ENCODE measurements at regions of chr2 and their contacts with region 1.

Region 1: GRCh38 chr2:207473049-207473930 is 56.5 kb upstream of the CREB1 start:
- DNase-seq: no peak
- H3K4me3 ChIP-seq: no peak overlapping the region
- H3K4me3 Mint-ChIP-seq: no peak overlapping the region
- H3K27ac Mint-ChIP-seq: no peak overlapping the region
- H3K4me1 ChIP-seq: peaks cover 25% of the 10 kb centered on the region
- H3K4me1 Mint-ChIP-seq: peaks cover 17% of the 10 kb centered on the region
- H3K27me3 ChIP-seq: no peaks in the 10 kb centered on the region
- H3K27me3 Mint-ChIP-seq: no peaks in the 10 kb centered on the region
- CTCF ChIP-seq: peak; percentile 9 to 30

Region 2: DNA sequence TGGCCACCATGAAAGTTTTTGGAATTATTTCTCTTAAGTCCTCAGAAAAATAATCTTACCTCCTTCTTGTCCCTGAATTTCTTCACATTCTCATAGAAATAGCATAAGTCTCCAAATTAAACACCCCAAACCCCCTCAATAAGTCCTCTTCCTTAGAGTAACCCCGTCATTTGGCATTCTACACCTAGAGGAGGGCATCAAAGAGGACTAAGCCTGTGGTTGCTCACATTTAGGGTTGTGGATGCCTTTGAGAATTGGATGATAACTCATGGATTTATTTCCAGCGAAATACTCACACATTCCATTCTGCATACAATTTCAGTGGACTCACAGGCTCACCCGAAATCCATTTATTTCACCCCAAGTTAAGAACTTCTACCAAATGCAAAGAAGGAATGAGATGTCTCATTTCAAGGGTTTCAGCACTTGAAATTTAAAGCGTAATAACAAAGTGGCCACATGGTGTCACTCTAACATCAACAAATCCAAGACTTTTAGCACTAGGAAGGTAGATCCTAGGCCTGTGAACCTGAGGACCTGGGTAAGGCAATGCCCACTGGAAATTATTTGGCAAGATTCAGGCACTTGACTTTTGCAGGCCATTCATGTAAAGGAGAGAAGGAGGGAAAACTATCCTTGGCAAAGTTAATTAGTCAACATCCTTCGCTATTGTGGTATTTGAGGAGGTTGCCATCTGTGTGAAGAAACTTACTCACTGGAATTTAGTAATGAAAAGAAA is 779.7 kb before region 1 on chr2:
- CTCF ChIA-PET with region 1: no interaction called
- POLR2A ChIA-PET with region 1: no interaction called
- intact Hi-C with region 1: loop called (anchors 1 kb)
- DNase-seq: peak in 1 of 2 experiments; percentile 62
- H3K4me3 ChIP-seq: no peak overlapping the region
- H3K4me3 Mint-ChIP-seq: no peak overlapping the region
- H3K27ac Mint-ChIP-seq: no peak overlapping the region
- H3K4me1 ChIP-seq: no peaks in the 10 kb centered on the region
- H3K4me1 Mint-ChIP-seq: no peaks in the 10 kb centered on the region
- H3K27me3 ChIP-seq: peaks cover 1% of the 10 kb centered on the region; the same call in 1 of the 2 replicates
- H3K27me3 Mint-ChIP-seq: peaks cover 27% of the 10 kb centered on the region
- CTCF ChIP-seq: peak; percentile 52 to 66

Region 3: DNA sequence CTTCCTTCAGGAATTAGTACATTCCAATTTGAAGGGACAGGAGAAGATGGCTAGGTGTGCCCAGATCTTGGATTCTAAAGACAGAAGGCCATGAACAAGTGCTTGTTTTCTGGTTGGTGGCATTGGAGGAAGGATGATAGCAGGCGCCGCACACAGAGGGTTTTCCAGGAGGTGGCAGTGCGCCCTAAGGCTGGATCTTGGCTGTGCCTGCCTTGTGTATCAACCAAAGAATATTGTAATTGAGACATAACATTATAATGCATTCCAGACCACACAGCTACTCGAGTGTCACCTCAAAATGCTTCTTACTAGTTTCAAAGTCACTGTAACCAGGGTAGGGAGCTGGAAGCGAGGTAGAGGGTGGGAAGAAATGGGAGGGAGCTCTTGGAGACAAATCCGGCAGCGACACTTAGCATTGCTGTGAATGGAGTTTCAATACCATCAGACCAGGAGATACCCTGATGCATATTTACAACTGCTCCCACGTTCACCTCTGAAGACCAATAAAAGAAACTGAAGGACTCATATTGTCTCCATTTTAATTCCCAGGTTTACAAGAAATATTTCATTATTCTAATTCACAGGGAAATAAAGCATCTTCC is 491.4 kb before region 1 on chr2:
- CTCF ChIA-PET with region 1: no interaction called
- POLR2A ChIA-PET with region 1: no interaction called
- intact Hi-C with region 1: loop called (anchors 1 kb)
- DNase-seq: peak in 1 of 2 experiments; percentile 37
- H3K4me3 ChIP-seq: no peak overlapping the region
- H3K4me3 Mint-ChIP-seq: no peak overlapping the region
- H3K27ac Mint-ChIP-seq: no peak overlapping the region
- H3K4me1 ChIP-seq: no peaks in the 10 kb centered on the region
- H3K4me1 Mint-ChIP-seq: no peaks in the 10 kb centered on the region
- H3K27me3 ChIP-seq: no peaks in the 10 kb centered on the region
- H3K27me3 Mint-ChIP-seq: peaks cover 10% of the 10 kb centered on the region
- CTCF ChIP-seq: peak; percentile 23 to 59

Region 4: DNA sequence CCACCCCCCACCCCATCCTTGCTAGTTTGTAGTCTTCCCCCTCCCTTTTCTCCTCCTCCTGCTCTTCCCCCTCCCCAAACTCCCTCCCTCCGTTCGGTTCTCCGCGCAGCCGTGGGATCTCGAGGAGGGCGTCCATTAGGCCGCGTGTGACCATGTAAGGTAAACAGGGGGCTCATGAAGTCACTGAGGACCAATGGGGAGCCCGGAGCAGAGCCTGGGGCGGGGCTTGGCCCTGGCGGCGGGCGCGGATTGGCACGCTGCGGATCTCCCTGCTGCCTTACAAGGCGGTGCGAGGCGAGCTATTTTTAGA is 307.3 kb before region 1 on chr2:
- CTCF ChIA-PET with region 1: interaction called, 3 read pairs
- POLR2A ChIA-PET with region 1: no interaction called
- intact Hi-C with region 1: loop called (anchors 5 kb)
- DNase-seq: peak; percentile 94 to 96
- H3K4me3 ChIP-seq: peak overlapping the region; percentile 39
- H3K4me3 Mint-ChIP-seq: peak overlapping the region; percentile 90
- H3K27ac Mint-ChIP-seq: peak overlapping the region; percentile 88
- H3K4me1 ChIP-seq: peaks cover 10% of the 10 kb centered on the region; the same call in 1 of the 2 replicates
- H3K4me1 Mint-ChIP-seq: peaks cover 9% of the 10 kb centered on the region
- H3K27me3 ChIP-seq: peaks cover 10% of the 10 kb centered on the region
- H3K27me3 Mint-ChIP-seq: peaks cover 23% of the 10 kb centered on the region
- CTCF ChIP-seq: no peak

Region 5: GRCh38 chr2:207341804-207342203 is 131.5 kb before region 1 on chr2:
- CTCF ChIA-PET with region 1: interaction called, 4 read pairs
- POLR2A ChIA-PET with region 1: no interaction called
- intact Hi-C with region 1: loop called (anchors 1 kb)
- DNase-seq: peak in 1 of 2 experiments; percentile 26
- H3K4me3 ChIP-seq: no peak overlapping the region
- H3K4me3 Mint-ChIP-seq: no peak overlapping the region
- H3K27ac Mint-ChIP-seq: no peak overlapping the region
- H3K4me1 ChIP-seq: no peaks in the 10 kb centered on the region
- H3K4me1 Mint-ChIP-seq: no peaks in the 10 kb centered on the region
- H3K27me3 ChIP-seq: no peaks in the 10 kb centered on the region; the same call in 1 of the 2 replicates
- H3K27me3 Mint-ChIP-seq: no peaks in the 10 kb centered on the region
- CTCF ChIP-seq: no peak

Region 6: GRCh38 chr2:208545403-208546042 is 1072.2 kb after region 1 on chr2:
- CTCF ChIA-PET with region 1: no interaction called
- POLR2A ChIA-PET with region 1: no interaction called
- intact Hi-C with region 1: no loop called
- DNase-seq: peak; percentile 39 to 50
- H3K4me3 ChIP-seq: no peak overlapping the region
- H3K4me3 Mint-ChIP-seq: no peak overlapping the region
- H3K27ac Mint-ChIP-seq: no peak overlapping the region
- H3K4me1 ChIP-seq: peaks cover 25% of the 10 kb centered on the region
- H3K4me1 Mint-ChIP-seq: peaks cover 16% of the 10 kb centered on the region
- H3K27me3 ChIP-seq: no peaks in the 10 kb centered on the region
- H3K27me3 Mint-ChIP-seq: no peaks in the 10 kb centered on the region
- CTCF ChIP-seq: no peak